ENCODE measurements at regions of chr11 and their contacts with region 1.

Region 1: GRCh38 chr11:80034801-80035200 is 594.0 kb upstream of the TENM4 start:
- DNase-seq: no peak
- H3K4me3 ChIP-seq: no peak overlapping the region
- H3K27ac ChIP-seq: no peak overlapping the region
- H3K4me1 ChIP-seq: no peaks in the 10 kb centered on the region
- H3K27me3 ChIP-seq: no peaks in the 10 kb centered on the region
- CTCF ChIP-seq: no peak
- EP300 ChIP-seq: no peak
- POLR2A ChIP-seq: no peak

Region 2: GRCh38 chr11:80107415-80107814 is 72.6 kb after region 1 on chr11:
- intact Hi-C with region 1: loop called (anchors 2 kb)
- DNase-seq: no peak
- H3K4me3 ChIP-seq: no peak overlapping the region
- H3K27ac ChIP-seq: no peak overlapping the region
- H3K4me1 ChIP-seq: no peaks in the 10 kb centered on the region
- H3K27me3 ChIP-seq: no peaks in the 10 kb centered on the region
- CTCF ChIP-seq: no peak
- EP300 ChIP-seq: no peak
- POLR2A ChIP-seq: no peak